Testis (tissue), 5 donors: ENCODE measurements at regions of chr1 and their contacts with region 1.

Region 1: DNA sequence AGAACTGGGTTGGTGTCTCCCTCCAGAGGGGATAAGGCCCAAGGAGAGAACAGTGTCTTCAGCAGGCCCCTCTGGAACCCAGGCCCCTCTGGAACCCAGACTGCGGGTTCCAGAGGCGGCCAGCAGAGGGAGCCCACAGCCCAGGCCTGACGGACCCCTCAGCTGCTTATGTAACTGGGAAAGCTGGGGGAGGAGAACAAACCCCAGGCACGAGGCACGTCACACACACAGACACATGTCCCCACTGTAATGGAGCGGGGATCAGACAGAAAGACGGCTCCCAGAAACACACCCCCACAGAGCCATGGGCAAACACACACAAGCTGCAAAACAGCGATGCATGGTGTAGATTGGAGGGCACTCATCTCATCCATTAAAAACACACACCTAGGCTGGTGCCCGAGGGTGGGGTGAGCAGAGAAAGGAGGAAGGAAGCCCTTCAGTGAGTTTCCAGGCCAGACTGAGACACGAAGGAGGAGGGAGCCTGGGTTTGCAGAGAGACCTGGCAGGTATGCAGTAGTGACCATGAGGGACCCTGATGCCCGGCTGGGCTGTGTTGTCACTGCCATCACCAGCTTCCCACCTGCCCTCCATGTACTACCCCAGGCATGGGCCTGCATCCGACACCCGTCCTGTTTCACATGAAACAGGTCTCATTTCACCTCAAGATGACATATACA is 2.8 kb upstream of the IGSF8 start:
- DNase-seq: peak; percentile 90
- H3K4me3 ChIP-seq: no peak overlapping the region
- H3K27ac ChIP-seq: peak overlapping the region; percentile 70 to 75
- H3K4me1 ChIP-seq: peaks cover 45% of the 10 kb centered on the region
- H3K27me3 ChIP-seq: no peaks in the 10 kb centered on the region
- CTCF ChIP-seq: peak; percentile 93 to 98 (median 96)
- POLR2A ChIP-seq: no peak

Region 2: DNA sequence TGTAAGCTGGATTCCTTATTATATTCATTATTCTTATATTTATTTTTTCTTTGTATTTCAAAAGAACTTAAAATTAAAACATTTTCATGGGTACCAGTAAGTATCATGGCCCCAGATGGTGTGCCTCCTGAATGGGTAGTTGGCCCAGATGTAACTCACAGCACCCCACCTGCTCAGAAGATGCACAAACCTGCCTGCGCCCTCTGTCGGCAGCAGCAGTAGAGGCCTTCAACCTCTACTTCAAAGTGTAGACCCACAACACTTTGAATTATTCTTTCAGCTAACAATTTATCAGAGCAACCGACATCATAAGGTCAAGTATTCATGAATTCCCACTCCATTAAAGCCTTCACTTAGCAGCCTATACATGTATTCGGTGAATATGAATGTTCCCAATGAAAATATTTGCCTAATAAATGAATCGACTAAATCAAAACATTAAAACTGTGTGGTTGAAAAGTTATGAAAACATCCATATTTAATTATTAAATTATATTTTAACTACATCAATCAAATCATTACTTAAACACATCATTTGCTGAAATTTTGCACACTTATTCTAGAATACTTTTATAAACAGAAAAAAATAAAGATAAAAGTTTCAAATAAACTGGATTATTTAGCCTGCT is 94.8 kb before region 1 on chr1:
- intact Hi-C with region 1: no loop called
- DNase-seq: peak; percentile 80
- H3K4me3 ChIP-seq: no peak overlapping the region
- H3K27ac ChIP-seq: no peak overlapping the region
- H3K4me1 ChIP-seq: no peaks in the 10 kb centered on the region
- H3K27me3 ChIP-seq: no peaks in the 10 kb centered on the region
- CTCF ChIP-seq: peak; percentile 54 to 67 (median 56)
- POLR2A ChIP-seq: no peak

Region 3: GRCh38 chr1:160251687-160252526 is 150.7 kb after region 1 on chr1:
- intact Hi-C with region 1: loop called (anchors 5 kb)
- DNase-seq: peak; percentile 83
- H3K4me3 ChIP-seq: no peak overlapping the region
- H3K27ac ChIP-seq: peak overlapping the region in 1 of 2 donors; percentile 3
- H3K4me1 ChIP-seq: peaks cover 12% of the 10 kb centered on the region
- H3K27me3 ChIP-seq: no peaks in the 10 kb centered on the region
- CTCF ChIP-seq: peak; percentile 58 to 84 (median 77)
- POLR2A ChIP-seq: no peak